ENCODE measurements at regions of chr3 and their contacts with region 1.

Region 1: GRCh38 chr3:170632780-170633179 is 46.9 kb upstream of the SLC7A14 start:
- DNase-seq: no peak
- H3K4me3 Mint-ChIP-seq: no peak overlapping the region
- H3K27ac Mint-ChIP-seq: no peak overlapping the region
- H3K4me1 Mint-ChIP-seq: peaks cover 8% of the 10 kb centered on the region
- H3K27me3 Mint-ChIP-seq: peaks cover 23% of the 10 kb centered on the region

Region 2: DNA sequence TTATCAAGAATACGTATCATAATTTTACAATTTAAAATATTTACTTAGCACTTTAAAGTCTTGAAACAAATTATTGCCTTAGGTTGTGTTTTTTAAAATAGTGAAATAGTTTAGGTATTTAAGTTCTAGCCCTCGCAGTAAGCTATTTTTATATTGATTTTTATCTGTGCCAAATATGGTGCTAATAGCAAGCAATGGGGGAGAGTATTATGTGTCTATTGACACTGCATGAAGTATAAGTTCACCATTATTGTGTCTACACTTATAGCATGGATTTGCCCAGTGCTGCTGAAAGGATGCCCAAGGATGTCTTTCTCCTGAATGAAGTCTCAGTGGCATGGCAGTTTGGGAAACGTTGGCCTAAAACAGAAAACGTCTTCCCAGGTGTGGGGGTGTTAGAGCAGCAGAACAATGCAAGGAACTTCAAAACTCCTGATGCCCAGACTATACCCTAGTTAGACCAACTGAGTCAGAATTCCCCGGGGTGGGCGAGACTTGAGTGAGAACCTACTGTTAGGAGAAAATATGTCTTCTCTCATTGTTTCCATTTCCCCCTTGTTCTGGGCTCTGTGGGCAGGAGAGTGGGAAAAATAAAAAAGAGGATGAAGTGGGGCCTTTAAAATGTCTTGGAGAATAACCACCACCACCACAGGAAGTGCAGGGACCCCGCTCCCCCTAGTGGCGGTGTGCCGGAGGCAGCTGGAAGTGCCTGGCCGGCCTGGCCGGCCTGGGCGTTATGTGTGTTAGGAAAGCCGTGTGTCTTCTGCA is 57.3 kb after region 1 on chr3:
- intact Hi-C with region 1: loop called (anchors 5 kb)
- DNase-seq: peak; percentile 20
- H3K4me3 Mint-ChIP-seq: no peak overlapping the region
- H3K27ac Mint-ChIP-seq: no peak overlapping the region
- H3K4me1 Mint-ChIP-seq: peaks cover 5% of the 10 kb centered on the region
- H3K27me3 Mint-ChIP-seq: no peaks in the 10 kb centered on the region

Region 3: GRCh38 chr3:171129827-171130226 is 497.0 kb after region 1 on chr3:
- intact Hi-C with region 1: no loop called
- DNase-seq: no peak
- H3K4me3 Mint-ChIP-seq: no peak overlapping the region
- H3K27ac Mint-ChIP-seq: no peak overlapping the region
- H3K4me1 Mint-ChIP-seq: peaks cover 3% of the 10 kb centered on the region
- H3K27me3 Mint-ChIP-seq: no peaks in the 10 kb centered on the region

Measured in activated T-helper 2 cell treated with anti-CD3 and anti-CD28 coated beads, Interferon-gamma antibody, Interleukin-2, Interleukin-4, amounts not matched to agents 10 μg/mL and 5 μg/mL and 100 μg/mL, durations not matched to agents 14 hours and 24 hours and 36 hours (primary cell).